Activated CD8-positive, alpha-beta T cell treated with anti-CD3 and anti-CD28 coated beads, Interleukin-2, amount 10 ng/mL, durations not matched to agents 7 days and 5 days (primary cell): ENCODE measurements at regions of chr2 and their contacts with region 1.

Region 1: DNA sequence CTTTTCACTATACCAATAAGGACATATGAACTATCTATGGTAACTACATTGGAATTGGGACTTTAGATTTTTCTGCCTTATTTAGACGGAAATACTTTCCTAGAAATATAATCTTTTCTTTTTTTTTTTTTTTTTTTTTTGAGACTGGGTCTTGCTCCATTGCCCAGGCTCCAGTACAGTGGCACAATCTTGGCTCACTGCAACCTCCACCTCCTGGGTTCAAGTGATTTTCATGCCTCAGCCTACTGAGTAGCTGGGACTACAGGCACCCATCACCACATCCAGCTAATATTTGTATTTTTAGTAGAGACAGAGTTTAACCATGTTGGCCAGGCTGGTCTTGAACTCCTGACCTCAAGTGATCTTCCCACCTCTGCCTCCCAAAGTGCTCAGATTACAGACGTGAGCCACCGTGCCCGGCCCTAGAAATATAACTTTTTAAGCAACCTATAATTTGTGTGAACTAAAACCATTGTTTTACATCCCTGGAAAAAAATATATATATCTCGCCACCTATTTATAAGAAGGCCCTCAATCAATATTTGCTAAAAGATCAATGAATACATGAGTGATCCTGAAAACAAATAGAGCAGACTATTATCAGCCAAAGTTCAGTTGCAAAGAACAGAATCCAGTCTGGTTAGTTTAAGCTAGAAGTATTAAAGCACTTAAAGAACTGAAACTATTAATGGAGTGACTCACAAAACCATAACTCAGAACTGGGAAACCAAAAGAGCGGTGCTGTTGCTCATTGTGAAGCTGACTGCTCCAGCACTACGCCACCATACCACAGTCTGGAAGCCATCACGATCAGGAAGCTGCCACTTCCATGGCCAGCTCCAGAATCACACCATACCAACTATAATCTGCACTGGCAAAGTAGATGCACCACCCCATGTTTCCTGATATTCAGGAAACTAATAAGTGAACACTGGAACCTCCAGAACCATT is 8.4 kb upstream of the HNRNPLL start:
- DNase-seq: no peak
- ATAC-seq: peak; percentile 67
- H3K4me3 Mint-ChIP-seq: no peak overlapping the region
- H3K27ac Mint-ChIP-seq: no peak overlapping the region
- H3K4me1 Mint-ChIP-seq: peaks cover 43% of the 10 kb centered on the region
- H3K27me3 Mint-ChIP-seq: no peaks in the 10 kb centered on the region

Region 2: DNA sequence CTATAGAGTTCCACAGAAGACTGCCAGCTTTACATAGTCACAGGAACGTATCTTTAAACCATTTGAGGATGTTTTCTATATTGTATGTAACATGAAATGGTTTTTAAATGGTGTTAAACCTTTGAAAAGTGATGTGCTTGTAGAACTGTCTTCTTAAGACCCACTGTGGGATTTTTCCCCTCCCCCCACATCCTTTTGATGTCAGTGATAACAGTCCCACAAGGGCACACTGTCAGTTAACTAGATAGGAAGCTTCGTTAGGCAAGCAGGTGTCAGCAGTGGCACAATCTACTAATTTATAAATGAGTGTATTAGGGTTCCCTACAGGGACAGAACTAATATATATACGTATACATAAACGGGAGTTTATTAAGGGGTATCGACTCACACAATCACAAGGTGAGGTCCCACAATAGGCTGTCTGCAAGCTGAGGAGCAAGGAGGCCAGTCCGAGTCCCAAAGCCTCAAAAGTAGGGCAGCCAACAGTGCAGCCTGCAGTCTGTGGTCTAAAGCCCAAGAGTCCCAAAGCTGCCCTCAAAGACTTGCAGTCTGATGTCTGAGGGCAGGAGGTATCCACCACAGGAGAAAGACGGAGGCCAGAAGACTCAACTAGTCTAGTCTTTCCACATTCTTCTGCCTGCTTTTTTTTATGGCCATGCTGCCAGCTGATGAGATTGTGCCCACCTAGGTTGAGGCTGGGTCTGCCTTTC is 15.4 kb after region 1 on chr2:
- CTCF ChIA-PET with region 1: interaction called, 28 read pairs
- POLR2A ChIA-PET with region 1: interaction called, 6 read pairs
- DNase-seq: peak; percentile 73
- ATAC-seq: peak; percentile 81
- H3K4me3 Mint-ChIP-seq: peak overlapping the region; percentile 13
- H3K27ac Mint-ChIP-seq: peak overlapping the region; percentile 54
- H3K4me1 Mint-ChIP-seq: peaks cover 32% of the 10 kb centered on the region
- H3K27me3 Mint-ChIP-seq: no peaks in the 10 kb centered on the region